ENCODE measurements at regions of chr2 and their contacts with region 1.

Region 1: DNA sequence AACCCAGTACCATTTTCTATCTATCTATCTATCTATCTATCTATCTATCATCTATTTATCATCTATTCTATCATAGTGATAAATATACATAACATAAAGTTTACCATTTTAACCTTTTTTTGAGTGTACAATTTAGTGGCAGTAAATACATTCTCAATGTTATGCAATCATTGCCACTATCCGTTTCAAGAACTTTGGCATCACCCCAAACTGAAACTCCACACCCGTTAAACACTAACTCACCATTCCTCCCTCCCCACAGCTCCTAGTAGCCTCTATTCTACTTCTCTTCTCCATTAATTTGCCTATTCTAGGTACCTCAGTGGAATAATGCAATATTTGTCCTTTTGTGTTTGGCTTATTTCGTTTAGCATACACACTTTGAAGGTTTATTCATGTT is 82.5 kb upstream of the KCNE4 start:
- DNase-seq: no peak
- H3K4me3 ChIP-seq: no peak overlapping the region
- H3K27ac ChIP-seq: no peak overlapping the region
- H3K4me1 ChIP-seq: peaks cover 6 to 7% of the 10 kb centered on the region in 2 experiments; a peak in 3 of 4 replicates
- H3K27me3 ChIP-seq: no peaks in the 10 kb centered on the region
- CTCF ChIP-seq: no peak
- EP300 ChIP-seq: no peak
- RAD21 ChIP-seq: no peak

Region 2: GRCh38 chr2:222946700-222947278 is 22.7 kb before region 1 on chr2:
- CTCF ChIA-PET with region 1: interaction called, 10 read pairs
- POLR2A ChIA-PET with region 1: no interaction called
- DNase-seq: no peak
- H3K4me3 ChIP-seq: no peak overlapping the region
- H3K27ac ChIP-seq: no peak overlapping the region
- H3K4me1 ChIP-seq: peaks cover 4 to 33% of the 10 kb centered on the region in 2 experiments; a peak in 3 of 4 replicates
- H3K27me3 ChIP-seq: no peaks in the 10 kb centered on the region
- CTCF ChIP-seq: no peak
- EP300 ChIP-seq: no peak
- RAD21 ChIP-seq: no peak

Region 3: DNA sequence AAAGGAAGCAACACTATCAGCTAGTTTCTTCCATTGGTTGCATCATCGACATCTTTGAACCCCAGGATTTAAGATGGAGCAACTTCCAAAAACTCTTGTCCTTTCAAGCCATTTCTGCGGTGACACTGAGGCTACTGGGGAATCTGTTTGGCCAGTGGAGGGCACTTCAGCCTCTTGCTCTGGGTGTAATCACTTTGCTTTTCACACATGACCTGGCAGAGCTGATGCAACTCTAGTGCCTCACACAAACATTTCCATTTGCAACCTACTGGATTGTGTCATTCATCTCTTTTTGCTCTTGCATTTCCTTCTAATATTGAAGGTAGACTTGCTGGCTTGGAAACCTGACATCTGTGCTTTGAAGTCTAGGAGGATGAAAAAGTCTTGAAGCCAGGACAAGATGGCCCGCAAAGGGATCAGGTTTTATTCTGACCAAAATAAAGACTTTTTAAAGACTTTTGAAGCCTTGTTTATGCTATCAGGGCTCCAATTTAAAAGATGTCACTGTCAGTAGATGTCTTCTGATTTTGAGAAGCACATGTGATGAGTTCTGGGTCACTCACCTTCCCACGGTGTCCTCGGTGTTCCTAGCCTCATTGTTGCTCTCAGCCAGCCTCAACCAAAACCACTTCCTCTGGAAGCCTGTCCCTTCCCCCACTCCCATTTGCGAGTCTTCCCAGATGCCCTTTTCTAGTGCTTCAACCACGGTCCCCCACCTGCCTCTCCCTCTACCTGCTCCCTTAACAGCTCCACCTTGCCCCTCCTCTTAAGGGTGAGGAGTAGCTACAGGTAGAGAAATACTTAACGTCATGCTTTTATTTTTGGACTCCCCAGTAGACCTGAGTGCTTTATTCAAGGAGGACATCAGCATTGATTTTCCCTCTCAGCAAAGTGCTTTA is 12.8 kb after region 1 on chr2:
- CTCF ChIA-PET with region 1: interaction called, 39 read pairs
- POLR2A ChIA-PET with region 1: no interaction called
- DNase-seq: peak; percentile 31
- H3K4me3 ChIP-seq: no peak overlapping the region
- H3K27ac ChIP-seq: peak overlapping the region; percentile 42 to 48; a peak in 2 of 4 replicates
- H3K4me1 ChIP-seq: peaks cover 7 to 8% of the 10 kb centered on the region in 2 experiments; a peak in 2 of 4 replicates
- H3K27me3 ChIP-seq: no peaks in the 10 kb centered on the region
- CTCF ChIP-seq: peak; percentile 60
- EP300 ChIP-seq: no peak
- RAD21 ChIP-seq: peak; percentile 88

Region 4: DNA sequence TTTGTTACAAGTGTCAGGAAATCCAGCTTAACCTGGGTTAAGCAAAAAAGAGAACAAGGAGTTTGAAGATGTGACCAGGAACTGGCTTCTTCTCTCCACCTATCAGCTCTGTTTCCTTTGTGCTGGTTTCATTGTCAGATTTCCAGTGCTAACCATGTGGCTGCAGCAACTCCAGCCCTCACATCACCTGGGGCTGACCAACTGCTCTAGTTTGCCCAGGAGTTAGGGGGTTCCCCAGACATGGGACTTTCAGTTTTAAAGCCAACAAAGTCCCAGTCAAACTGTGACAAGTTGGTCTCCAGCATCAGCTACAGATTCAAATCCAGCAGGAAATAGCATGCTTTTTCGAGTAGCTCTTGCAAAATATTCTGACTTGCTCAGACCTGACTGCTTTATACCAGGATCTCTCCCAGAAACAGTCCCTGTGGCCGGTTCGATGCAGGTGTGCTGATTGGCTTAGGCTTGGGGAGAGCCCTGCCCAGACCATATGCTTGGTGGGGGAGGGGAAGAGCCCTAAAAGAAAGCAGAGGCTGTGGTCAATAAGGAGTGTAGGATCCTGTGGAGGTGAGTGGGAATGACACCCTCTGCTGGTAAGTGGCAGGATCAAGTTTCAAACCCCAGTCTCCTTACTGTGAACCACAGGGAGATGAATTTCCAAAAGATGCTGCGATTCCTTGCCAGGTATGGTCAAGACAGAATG is 132.0 kb after region 1 on chr2:
- CTCF ChIA-PET with region 1: interaction called, 37 read pairs
- POLR2A ChIA-PET with region 1: no interaction called
- DNase-seq: peak; percentile 42
- H3K4me3 ChIP-seq: no peak overlapping the region
- H3K27ac ChIP-seq: peak overlapping the region; percentile 59 to 72; a peak in 3 of 4 replicates
- H3K4me1 ChIP-seq: peaks cover 16 to 33% of the 10 kb centered on the region in 2 experiments; a peak in 3 of 4 replicates
- H3K27me3 ChIP-seq: no peaks in the 10 kb centered on the region
- CTCF ChIP-seq: peak; percentile 53
- EP300 ChIP-seq: no peak
- RAD21 ChIP-seq: peak; percentile 62

Region 5: GRCh38 chr2:223601932-223602666 is 632.6 kb after region 1 on chr2 and contains the start of gene SCG2:
- CTCF ChIA-PET with region 1: interaction called, 19 read pairs
- POLR2A ChIA-PET with region 1: interaction called, 3 read pairs
- DNase-seq: peak; percentile 80
- H3K4me3 ChIP-seq: peak within 1 kb of the TSS; percentile 66 to 74
- H3K27ac ChIP-seq: peak within 1 kb of the TSS; percentile 94 to 95
- H3K4me1 ChIP-seq: peaks cover 22 to 26% of the 10 kb centered on the region in 2 experiments
- H3K27me3 ChIP-seq: no peaks in the 10 kb centered on the region
- CTCF ChIP-seq: peak; percentile 60
- EP300 ChIP-seq: no peak; a peak in 1 of 4 replicates
- RAD21 ChIP-seq: peak; percentile 65
- polyA plus RNA-seq, gene SCG2: 373 and 509 TPM in 2 replicates

Region 6: DNA sequence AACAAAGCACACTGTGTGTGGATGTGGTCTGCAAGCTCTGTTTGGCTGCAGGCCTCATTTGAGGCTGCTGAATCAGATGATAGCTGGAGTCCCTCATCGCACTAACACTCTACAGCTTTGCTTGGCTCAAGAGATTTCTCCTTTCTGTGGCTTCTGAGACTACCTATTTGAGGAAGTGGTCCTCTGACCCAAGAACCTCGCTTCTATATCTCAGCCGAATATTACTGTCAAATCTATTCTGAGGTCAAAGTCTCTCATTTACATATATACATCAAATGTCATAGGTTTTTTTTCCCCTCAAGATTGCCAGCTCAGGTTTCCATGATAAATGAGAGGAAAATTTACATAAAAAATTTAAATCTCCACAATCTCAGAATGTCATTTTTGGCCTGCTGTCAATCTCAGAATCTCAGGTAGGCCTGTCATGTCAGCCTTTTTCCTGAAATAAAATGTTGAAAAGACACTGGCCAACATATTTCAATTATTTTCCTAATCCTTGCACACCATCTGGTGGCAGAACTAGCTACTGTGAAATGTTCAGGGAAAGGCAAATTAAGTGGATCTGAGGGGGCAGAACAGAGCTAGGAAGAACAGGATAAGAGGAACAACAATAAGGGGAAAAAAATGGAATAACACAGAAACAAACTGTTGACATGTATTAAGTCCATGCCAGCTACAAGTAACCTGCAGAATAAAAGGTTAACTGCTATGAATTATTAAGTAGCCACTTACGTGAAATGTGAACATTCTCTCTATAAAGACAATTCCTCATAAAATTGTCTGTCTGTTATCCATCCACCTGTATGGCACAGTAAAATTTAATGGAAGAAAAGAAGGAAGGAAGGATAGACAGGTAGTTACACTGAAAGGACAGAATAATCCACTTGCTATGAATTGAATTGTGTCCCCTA is 828.6 kb after region 1 on chr2:
- CTCF ChIA-PET with region 1: interaction called, 69 read pairs
- POLR2A ChIA-PET with region 1: no interaction called
- DNase-seq: peak; percentile 48
- H3K4me3 ChIP-seq: peak overlapping the region in 1 of 2 experiments; percentile 29; a peak in 1 of 4 replicates
- H3K27ac ChIP-seq: peak overlapping the region in 1 of 2 experiments; percentile 69; a peak in 2 of 4 replicates
- H3K4me1 ChIP-seq: peaks cover 0 to 47% of the 10 kb centered on the region in 2 experiments; a peak in 2 of 4 replicates
- H3K27me3 ChIP-seq: no peaks in the 10 kb centered on the region
- CTCF ChIP-seq: peak; percentile 81
- EP300 ChIP-seq: no peak
- RAD21 ChIP-seq: peak; percentile 94

Measured in SK-N-SH (cell line).